GM10248 (cell line): ENCODE measurements at regions of chr4 and their contacts with region 1.

Region 1: DNA sequence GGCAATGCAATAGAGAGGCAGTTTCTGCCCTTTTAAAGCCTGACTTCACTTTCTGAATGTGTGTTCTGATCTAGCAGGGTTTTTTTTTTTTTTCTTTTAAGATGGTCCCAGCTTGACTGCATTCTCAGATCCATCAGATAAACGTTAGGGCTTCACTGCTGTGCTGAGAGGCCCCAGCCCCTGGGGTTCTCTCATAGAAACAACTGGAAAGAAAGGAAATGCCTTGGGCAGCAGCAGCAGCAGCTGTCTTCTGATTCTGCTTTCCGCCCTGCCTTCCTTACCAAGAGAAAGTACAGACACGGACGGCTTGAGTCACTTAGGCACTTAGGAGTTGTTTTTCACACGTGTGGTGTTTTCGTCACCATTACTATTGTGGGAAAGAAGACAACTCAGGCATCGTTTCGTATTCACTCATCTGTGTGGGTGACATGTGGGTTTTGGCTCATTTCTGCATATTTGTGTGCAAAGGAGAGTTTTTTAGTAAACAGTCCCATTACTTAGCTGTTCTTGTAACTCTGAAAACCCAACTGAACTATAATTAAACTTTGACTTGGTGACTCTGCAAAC is 172.0 kb downstream of the PTTG2 start:
- DNase-seq: peak; percentile 72
- CTCF ChIP-seq: no peak

Region 2: GRCh38 chr4:38069271-38069760 is 62.9 kb before region 1 on chr4:
- CTCF ChIA-PET with region 1: interaction called, 15 read pairs
- POLR2A ChIA-PET with region 1: no interaction called
- DNase-seq: peak; percentile 44
- CTCF ChIP-seq: no peak

Region 3: GRCh38 chr4:38114386-38115150 is 17.6 kb before region 1 on chr4:
- CTCF ChIA-PET with region 1: interaction called, 19 read pairs
- POLR2A ChIA-PET with region 1: interaction called, 5 read pairs
- DNase-seq: no peak
- CTCF ChIP-seq: no peak

Region 4: GRCh38 chr4:38119668-38120385 is 12.4 kb before region 1 on chr4:
- CTCF ChIA-PET with region 1: interaction called, 19 read pairs
- POLR2A ChIA-PET with region 1: interaction called, 5 read pairs
- DNase-seq: no peak
- CTCF ChIP-seq: no peak

Region 5: GRCh38 chr4:38154681-38155608 is 22.8 kb after region 1 on chr4:
- CTCF ChIA-PET with region 1: interaction called, 19 read pairs
- POLR2A ChIA-PET with region 1: interaction called, 15 read pairs
- DNase-seq: no peak
- CTCF ChIP-seq: no peak

Region 6: GRCh38 chr4:38160487-38161207 is 28.5 kb after region 1 on chr4:
- CTCF ChIA-PET with region 1: interaction called, 19 read pairs
- POLR2A ChIA-PET with region 1: interaction called, 15 read pairs
- DNase-seq: peak; percentile 81
- CTCF ChIP-seq: no peak